Gastrocnemius medialis (tissue), 4 donors: ENCODE measurements at regions of chr10 and their contacts with region 1.

Region 1: GRCh38 chr10:13099666-13100348 is at the start of gene OPTN:
- DNase-seq: peak; percentile 61 to 83
- ATAC-seq: peak; percentile 55
- H3K4me3 ChIP-seq: peak within 1 kb of the TSS; percentile 78 to 94 (median 88)
- H3K27ac ChIP-seq: peak within 1 kb of the TSS; percentile 96 to 99 (median 98)
- H3K4me1 ChIP-seq: peaks cover 31 to 32% of the 10 kb centered on the region in 2 donors
- H3K27me3 ChIP-seq: no peaks in the 10 kb centered on the region
- CTCF ChIP-seq: peak; percentile 79 to 88 (median 83)
- POLR2A ChIP-seq: peak; percentile 94 to 95
- total RNA-seq, gene OPTN: 295 to 592 (median 527) TPM

Region 2: GRCh38 chr10:11742005-11742778 is 1357.6 kb before region 1 on chr10 and contains the start of gene ECHDC3:
- in situ Hi-C with region 1: no loop called
- intact Hi-C with region 1: loop called (anchors 10 kb)
- DNase-seq: peak; percentile 71 to 72
- ATAC-seq: peak; percentile 61 to 65
- H3K4me3 ChIP-seq: peak within 1 kb of the TSS; percentile 72 to 86 (median 78)
- H3K27ac ChIP-seq: peak within 1 kb of the TSS; percentile 93 to 96 (median 94)
- H3K4me1 ChIP-seq: peaks cover 28 to 34% of the 10 kb centered on the region in 2 donors
- H3K27me3 ChIP-seq: no peaks in the 10 kb centered on the region
- CTCF ChIP-seq: no peak
- POLR2A ChIP-seq: peak; percentile 83 to 86
- total RNA-seq, gene ECHDC3: 465 to 605 (median 490) TPM

Region 3: GRCh38 chr10:12264204-12264940 is 835.4 kb before region 1 on chr10:
- in situ Hi-C with region 1: loop called in 2 of 4 experiments (anchors 25 kb)
- intact Hi-C with region 1: no loop called
- DNase-seq: peak; percentile 22 to 36
- ATAC-seq: peak; percentile 39 to 65
- H3K4me3 ChIP-seq: peak overlapping the region in 3 of 4 donors; percentile 33 to 47 (median 41)
- H3K27ac ChIP-seq: peak overlapping the region in 1 of 4 donors; percentile 22
- H3K4me1 ChIP-seq: no peaks in the 10 kb centered on the region
- H3K27me3 ChIP-seq: no peaks in the 10 kb centered on the region
- CTCF ChIP-seq: peak; percentile 48 to 84 (median 73)
- POLR2A ChIP-seq: no peak

Region 4: DNA sequence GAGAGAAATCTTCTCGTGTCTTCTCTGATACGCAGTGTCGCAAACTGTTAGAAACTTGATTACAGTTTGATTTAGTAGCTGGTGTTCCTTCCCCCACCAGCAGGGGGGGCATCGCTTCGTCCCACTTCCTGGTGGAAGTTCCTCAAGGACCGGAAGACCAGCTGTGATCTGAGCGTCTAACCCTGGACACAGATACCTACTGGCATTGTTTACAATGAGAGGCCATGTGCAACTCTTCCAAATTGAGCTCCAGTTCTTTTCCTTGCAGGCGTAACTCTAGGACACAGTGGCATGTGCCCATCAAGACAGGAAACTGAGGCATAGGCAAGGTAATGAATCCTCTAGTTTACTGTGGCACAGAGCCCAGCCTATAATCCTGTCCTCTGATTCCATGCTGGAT is 317.3 kb before region 1 on chr10:
- in situ Hi-C with region 1: loop called in 1 of 4 experiments (anchors 25 kb)
- intact Hi-C with region 1: loop called (anchors 5 kb)
- DNase-seq: no peak
- ATAC-seq: peak in 1 of 2 donors; percentile 10
- H3K4me3 ChIP-seq: no peak overlapping the region
- H3K27ac ChIP-seq: no peak overlapping the region
- H3K4me1 ChIP-seq: no peaks in the 10 kb centered on the region
- H3K27me3 ChIP-seq: peaks cover 0 to 9% (median 0%) of the 10 kb centered on the region in 3 donors
- CTCF ChIP-seq: peak; percentile 53 to 77 (median 67)
- POLR2A ChIP-seq: no peak

Region 5: DNA sequence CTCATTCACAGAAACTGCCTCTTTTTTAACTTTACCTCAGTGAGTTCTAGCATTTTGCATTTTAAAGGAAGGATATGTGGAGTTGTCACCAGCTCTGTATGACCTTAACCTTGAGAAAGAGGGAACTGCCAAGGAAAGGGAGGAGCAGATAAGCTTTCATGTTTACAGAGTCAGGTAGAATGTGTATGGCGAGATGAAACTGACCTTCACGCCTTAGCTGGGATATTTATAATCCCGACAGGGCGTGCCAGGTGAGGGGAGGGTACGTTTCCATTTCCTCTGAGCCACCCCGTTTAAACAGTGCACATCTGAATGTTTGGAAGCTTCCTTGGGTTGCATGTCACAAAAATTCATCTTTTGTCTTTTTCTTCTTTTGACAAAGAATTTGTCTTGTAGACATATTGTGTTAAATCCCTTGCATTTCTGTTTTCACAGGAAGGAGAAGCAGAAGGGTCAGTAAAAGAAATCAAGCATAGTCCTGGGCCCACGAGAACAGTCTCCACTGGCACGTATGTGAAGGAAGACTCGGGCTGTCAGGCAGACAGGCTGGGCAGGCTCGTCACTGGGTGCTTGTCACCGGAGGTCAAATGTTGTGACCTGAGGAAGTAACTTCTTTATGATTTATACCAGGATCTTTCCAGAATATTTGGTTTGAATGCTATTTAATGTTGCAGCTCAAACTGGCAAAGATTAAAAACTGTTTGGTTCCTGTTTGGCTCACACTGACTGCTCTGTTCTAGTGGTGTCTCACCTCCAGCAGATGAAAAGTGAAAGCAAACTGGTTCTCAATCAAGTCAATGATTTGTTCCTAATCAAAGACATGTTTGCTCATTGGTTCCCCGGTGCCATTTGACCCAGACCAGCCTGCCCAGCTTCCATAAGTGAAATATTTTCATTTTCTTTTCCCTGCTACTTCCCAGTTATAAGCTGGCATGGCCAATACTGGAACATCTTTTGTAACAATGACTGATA is 16.3 kb after region 1 on chr10:
- in situ Hi-C with region 1: no loop called
- intact Hi-C with region 1: loop called (anchors 2 kb)
- DNase-seq: peak; percentile 57 to 73
- ATAC-seq: peak; percentile 63 to 67
- H3K4me3 ChIP-seq: peak overlapping the region in 2 of 4 donors; percentile 19 to 20
- H3K27ac ChIP-seq: peak overlapping the region; percentile 86 to 97 (median 92)
- H3K4me1 ChIP-seq: peaks cover 48 to 58% of the 10 kb centered on the region in 2 donors
- H3K27me3 ChIP-seq: no peaks in the 10 kb centered on the region
- CTCF ChIP-seq: no peak
- POLR2A ChIP-seq: peak in 1 of 2 donors; percentile 49

Region 6: DNA sequence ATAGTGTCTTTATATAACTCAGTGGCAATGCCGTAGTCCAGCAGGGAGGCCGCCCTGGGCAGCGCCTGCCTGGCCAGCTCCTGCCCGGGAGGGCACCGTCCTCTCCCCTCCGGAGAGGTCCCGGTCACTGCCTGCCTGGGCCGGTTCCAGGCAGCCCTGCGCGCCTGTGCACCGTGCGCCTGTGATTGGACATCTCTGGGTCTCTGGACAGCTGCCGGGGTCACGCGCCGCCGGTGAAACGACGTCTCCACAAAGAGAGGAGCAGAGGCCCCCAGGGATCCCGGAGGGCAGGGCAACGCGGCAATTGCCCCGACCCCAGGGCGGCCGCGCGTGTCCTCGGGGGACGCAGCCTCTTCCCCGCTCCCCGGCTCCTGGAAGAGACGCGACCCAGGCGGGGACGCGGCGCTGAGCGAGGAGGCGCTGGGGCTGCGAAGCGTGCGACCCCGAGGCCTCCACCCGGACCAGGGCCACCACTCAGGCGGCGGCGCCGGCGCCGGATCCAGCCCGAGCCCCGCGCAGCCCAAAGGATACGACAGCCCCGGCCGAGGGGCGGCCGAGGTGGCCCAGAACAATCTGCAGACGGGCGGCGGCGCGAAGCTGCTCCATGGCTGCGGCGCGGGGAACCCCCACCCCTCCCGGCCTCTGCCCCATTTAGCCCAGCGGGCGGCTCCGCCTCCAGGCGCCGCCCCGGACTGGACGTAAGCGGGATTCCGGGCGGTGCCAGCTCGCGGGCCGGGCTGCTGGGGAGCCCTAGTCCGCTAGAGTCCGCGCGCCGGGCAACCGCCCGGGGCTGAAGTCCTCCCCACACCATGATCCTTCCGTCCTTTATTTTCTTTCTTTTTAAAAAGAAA is 199.9 kb after region 1 on chr10 and contains the start of gene PHYH:
- in situ Hi-C with region 1: no loop called
- intact Hi-C with region 1: loop called (anchors 5 kb)
- DNase-seq: peak; percentile 94 to 98
- ATAC-seq: peak; percentile 87 to 90
- H3K4me3 ChIP-seq: peak within 1 kb of the TSS; percentile 63 to 96 (median 77)
- H3K27ac ChIP-seq: peak within 1 kb of the TSS; percentile 96 to 100 (median 100)
- H3K4me1 ChIP-seq: peaks cover 17 to 21% of the 10 kb centered on the region in 2 donors
- H3K27me3 ChIP-seq: no peaks in the 10 kb centered on the region
- CTCF ChIP-seq: peak in 1 of 5 experiments; percentile 26
- POLR2A ChIP-seq: peak; percentile 90 to 95
- total RNA-seq, gene PHYH: 107 to 147 (median 143) TPM

Region 7: GRCh38 chr10:13743101-13743693 is 643.4 kb after region 1 on chr10:
- in situ Hi-C with region 1: no loop called
- intact Hi-C with region 1: no loop called
- DNase-seq: no peak
- ATAC-seq: no peak
- H3K4me3 ChIP-seq: no peak overlapping the region
- H3K27ac ChIP-seq: no peak overlapping the region
- H3K4me1 ChIP-seq: peaks cover 0 to 14% of the 10 kb centered on the region in 2 donors
- H3K27me3 ChIP-seq: no peaks in the 10 kb centered on the region
- CTCF ChIP-seq: no peak
- POLR2A ChIP-seq: no peak

Region 8: DNA sequence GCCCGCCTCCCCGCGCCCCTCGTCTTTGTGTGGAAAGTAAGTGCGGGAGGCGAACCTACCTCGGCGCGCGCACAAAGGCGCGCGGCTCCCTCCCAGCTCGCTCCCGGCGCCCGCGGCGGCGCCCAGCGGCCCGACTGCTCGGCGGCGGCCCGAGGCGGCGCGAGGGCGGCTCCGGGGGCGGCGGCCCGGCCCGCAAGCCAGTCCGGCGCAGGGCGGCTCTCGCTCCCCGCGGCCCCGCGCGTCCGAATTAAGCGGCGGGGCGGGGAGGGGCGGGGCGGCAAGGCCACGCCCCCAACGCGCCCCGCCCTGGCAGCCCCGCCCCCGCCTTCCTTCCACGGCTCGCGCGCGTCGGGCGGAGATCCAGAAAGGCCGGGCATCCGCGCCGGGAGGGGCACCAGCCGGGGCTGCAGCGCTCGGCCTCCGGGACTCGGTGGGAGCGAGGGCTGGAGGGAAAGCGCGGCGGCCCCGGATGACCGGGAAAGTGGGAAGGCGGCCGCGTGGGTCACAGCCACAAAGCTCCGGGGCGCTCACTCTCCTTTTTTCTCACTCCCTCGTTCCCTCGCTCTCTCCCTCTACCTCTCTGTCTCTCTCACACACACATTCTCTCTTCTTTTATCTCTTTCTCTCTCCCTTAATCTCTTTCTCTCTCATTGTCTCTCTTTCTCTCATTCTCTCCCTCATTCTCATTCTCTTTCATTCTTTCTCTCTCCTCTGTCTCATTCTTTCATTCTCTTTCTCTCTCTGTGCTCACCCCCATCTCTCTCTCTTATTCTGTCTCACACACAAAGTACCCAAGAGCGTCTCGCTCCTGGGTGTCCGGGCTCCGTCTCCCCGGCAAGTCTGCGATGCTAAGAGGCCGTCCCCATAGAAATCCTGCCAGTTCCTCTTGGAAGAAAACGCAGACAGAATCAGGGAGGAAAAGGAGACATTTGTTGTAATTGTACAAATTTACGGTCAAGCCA is 1504.7 kb after region 1 on chr10:
- in situ Hi-C with region 1: no loop called
- intact Hi-C with region 1: loop called (anchors 10 kb)
- DNase-seq: peak; percentile 52 to 53
- ATAC-seq: peak; percentile 89 to 90
- H3K4me3 ChIP-seq: peak overlapping the region; percentile 56 to 79 (median 66)
- H3K27ac ChIP-seq: peak overlapping the region; percentile 30 to 58 (median 44)
- H3K4me1 ChIP-seq: peaks cover 7 to 12% of the 10 kb centered on the region in 2 donors
- H3K27me3 ChIP-seq: no peaks in the 10 kb centered on the region
- CTCF ChIP-seq: no peak
- POLR2A ChIP-seq: peak in 1 of 2 donors; percentile 66